Caco-2 (cell line): ENCODE measurements at regions of chr7 and their contacts with region 1.

Region 1: GRCh38 chr7:22356701-22357353 is at the start of gene RAPGEF5:
- DNase-seq: peak in 1 of 2 experiments; percentile 72
- H3K4me3 ChIP-seq: peak within 1 kb of the TSS; percentile 54
- H3K4me3 Mint-ChIP-seq: peak within 1 kb of the TSS; percentile 89
- H3K27ac Mint-ChIP-seq: peak within 1 kb of the TSS; percentile 92
- H3K4me1 ChIP-seq: peaks cover 40% of the 10 kb centered on the region
- H3K4me1 Mint-ChIP-seq: peaks cover 38% of the 10 kb centered on the region
- H3K27me3 ChIP-seq: no peaks in the 10 kb centered on the region
- H3K27me3 Mint-ChIP-seq: no peaks in the 10 kb centered on the region
- CTCF ChIP-seq: no peak
- total RNA-seq, gene RAPGEF5: 16.9 and 20.7 TPM in 2 replicates

Region 2: DNA sequence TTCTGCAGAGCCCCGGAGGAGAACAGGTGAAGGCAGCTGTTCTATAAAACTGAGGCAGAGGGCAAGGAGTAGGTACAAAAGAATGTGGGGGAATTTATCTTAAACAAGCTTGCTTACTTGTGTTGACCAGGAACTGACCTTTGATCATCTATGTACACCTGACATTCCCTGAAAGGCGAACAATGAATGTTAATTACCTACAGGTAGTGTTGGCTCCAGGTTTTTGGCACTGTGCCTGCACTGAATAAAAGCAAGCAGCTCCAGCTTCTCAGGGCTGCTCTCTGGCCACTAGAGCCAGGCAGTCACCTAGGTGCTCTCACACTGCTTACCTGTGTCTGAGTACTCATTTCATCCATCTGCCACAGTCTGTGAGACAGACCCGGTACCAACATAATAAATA is 86.9 kb before region 1 on chr7:
- CTCF ChIA-PET with region 1: no interaction called
- POLR2A ChIA-PET with region 1: no interaction called
- intact Hi-C with region 1: loop called (anchors 2 kb)
- DNase-seq: peak; percentile 66 to 86
- H3K4me3 ChIP-seq: no peak overlapping the region
- H3K4me3 Mint-ChIP-seq: no peak overlapping the region
- H3K27ac Mint-ChIP-seq: peak overlapping the region; percentile 76
- H3K4me1 ChIP-seq: peaks cover 38% of the 10 kb centered on the region
- H3K4me1 Mint-ChIP-seq: peaks cover 17% of the 10 kb centered on the region
- H3K27me3 ChIP-seq: no peaks in the 10 kb centered on the region
- H3K27me3 Mint-ChIP-seq: no peaks in the 10 kb centered on the region
- CTCF ChIP-seq: no peak

Region 3: GRCh38 chr7:22346383-22347107 is 10.3 kb before region 1 on chr7:
- CTCF ChIA-PET with region 1: no interaction called
- POLR2A ChIA-PET with region 1: no interaction called
- intact Hi-C with region 1: loop called (anchors 1 kb)
- DNase-seq: peak in 1 of 2 experiments; percentile 42
- H3K4me3 ChIP-seq: no peak overlapping the region
- H3K4me3 Mint-ChIP-seq: peak overlapping the region; percentile 30
- H3K27ac Mint-ChIP-seq: peak overlapping the region; percentile 40
- H3K4me1 ChIP-seq: peaks cover 49% of the 10 kb centered on the region
- H3K4me1 Mint-ChIP-seq: peaks cover 31% of the 10 kb centered on the region
- H3K27me3 ChIP-seq: no peaks in the 10 kb centered on the region
- H3K27me3 Mint-ChIP-seq: no peaks in the 10 kb centered on the region
- CTCF ChIP-seq: no peak

Region 4: GRCh38 chr7:22393913-22394729 is 37.3 kb after region 1 on chr7:
- CTCF ChIA-PET with region 1: no interaction called
- POLR2A ChIA-PET with region 1: no interaction called
- intact Hi-C with region 1: loop called (anchors 2 kb)
- DNase-seq: peak in 1 of 2 experiments; percentile 9
- H3K4me3 ChIP-seq: no peak overlapping the region
- H3K4me3 Mint-ChIP-seq: peak overlapping the region; percentile 13
- H3K27ac Mint-ChIP-seq: no peak overlapping the region
- H3K4me1 ChIP-seq: peaks cover 16% of the 10 kb centered on the region
- H3K4me1 Mint-ChIP-seq: peaks cover 23% of the 10 kb centered on the region
- H3K27me3 ChIP-seq: no peaks in the 10 kb centered on the region
- H3K27me3 Mint-ChIP-seq: no peaks in the 10 kb centered on the region
- CTCF ChIP-seq: no peak

Region 5: GRCh38 chr7:22411977-22412693 is 55.3 kb after region 1 on chr7:
- CTCF ChIA-PET with region 1: no interaction called
- POLR2A ChIA-PET with region 1: no interaction called
- intact Hi-C with region 1: no loop called
- DNase-seq: no peak
- H3K4me3 ChIP-seq: no peak overlapping the region
- H3K4me3 Mint-ChIP-seq: no peak overlapping the region
- H3K27ac Mint-ChIP-seq: no peak overlapping the region
- H3K4me1 ChIP-seq: no peaks in the 10 kb centered on the region
- H3K4me1 Mint-ChIP-seq: no peaks in the 10 kb centered on the region
- H3K27me3 ChIP-seq: no peaks in the 10 kb centered on the region
- H3K27me3 Mint-ChIP-seq: no peaks in the 10 kb centered on the region
- CTCF ChIP-seq: no peak

Region 6: GRCh38 chr7:22433710-22434460 is 77.1 kb after region 1 on chr7:
- CTCF ChIA-PET with region 1: no interaction called
- POLR2A ChIA-PET with region 1: no interaction called
- intact Hi-C with region 1: loop called (anchors 5 kb)
- DNase-seq: peak; percentile 19 to 48
- H3K4me3 ChIP-seq: no peak overlapping the region
- H3K4me3 Mint-ChIP-seq: no peak overlapping the region
- H3K27ac Mint-ChIP-seq: no peak overlapping the region
- H3K4me1 ChIP-seq: peaks cover 18% of the 10 kb centered on the region
- H3K4me1 Mint-ChIP-seq: peaks cover 20% of the 10 kb centered on the region
- H3K27me3 ChIP-seq: no peaks in the 10 kb centered on the region
- H3K27me3 Mint-ChIP-seq: peaks cover 5% of the 10 kb centered on the region
- CTCF ChIP-seq: no peak

Region 7: GRCh38 chr7:22452142-22452959 is 95.5 kb after region 1 on chr7:
- CTCF ChIA-PET with region 1: no interaction called
- POLR2A ChIA-PET with region 1: no interaction called
- intact Hi-C with region 1: loop called (anchors 10 kb)
- DNase-seq: peak; percentile 46 to 60
- H3K4me3 ChIP-seq: no peak overlapping the region
- H3K4me3 Mint-ChIP-seq: peak overlapping the region; percentile 32
- H3K27ac Mint-ChIP-seq: no peak overlapping the region
- H3K4me1 ChIP-seq: no peaks in the 10 kb centered on the region
- H3K4me1 Mint-ChIP-seq: peaks cover 7% of the 10 kb centered on the region
- H3K27me3 ChIP-seq: no peaks in the 10 kb centered on the region; the same call in 1 of the 2 replicates
- H3K27me3 Mint-ChIP-seq: no peaks in the 10 kb centered on the region
- CTCF ChIP-seq: peak; percentile 67 to 76

Region 8: DNA sequence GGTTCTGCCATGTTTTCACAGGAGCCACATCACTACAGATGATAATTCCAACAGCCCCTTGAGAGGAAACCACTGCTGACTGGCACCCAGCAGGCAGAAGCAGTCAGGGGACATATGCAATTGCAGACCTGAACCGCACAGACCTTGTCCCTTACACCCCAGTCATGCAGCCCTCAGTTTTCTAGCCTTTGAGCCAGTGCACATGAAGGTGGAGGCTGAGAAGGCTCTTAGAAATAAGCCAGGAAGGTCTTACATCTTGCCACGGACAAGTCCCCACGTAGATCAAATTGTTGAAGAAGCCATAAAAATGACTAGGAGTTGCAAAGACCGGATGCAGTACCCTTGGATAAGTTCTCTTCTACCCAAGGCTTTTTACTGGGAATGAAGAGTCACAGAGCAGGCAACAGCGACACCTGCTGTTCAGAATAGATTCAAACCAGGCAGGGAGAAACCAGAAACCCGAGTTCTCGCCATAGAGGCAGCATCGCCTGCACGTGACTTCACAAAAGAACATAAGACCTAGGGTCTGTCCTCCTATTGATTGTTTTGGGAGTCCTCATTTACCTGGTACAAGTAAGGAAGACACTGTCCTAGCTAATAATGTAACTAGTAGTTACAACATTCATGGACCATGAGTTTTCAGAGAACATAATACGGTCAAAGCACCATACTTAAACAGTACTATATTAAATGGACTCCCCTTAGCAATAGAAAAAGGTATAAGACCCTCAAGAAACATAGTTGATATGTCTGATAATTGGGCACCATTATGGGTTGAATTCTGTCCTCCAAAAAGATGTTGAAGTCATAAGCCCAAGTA is 132.0 kb after region 1 on chr7:
- CTCF ChIA-PET with region 1: no interaction called
- POLR2A ChIA-PET with region 1: no interaction called
- intact Hi-C with region 1: loop called (anchors 5 kb)
- DNase-seq: peak; percentile 67 to 80
- H3K4me3 ChIP-seq: no peak overlapping the region
- H3K4me3 Mint-ChIP-seq: no peak overlapping the region
- H3K27ac Mint-ChIP-seq: no peak overlapping the region
- H3K4me1 ChIP-seq: no peaks in the 10 kb centered on the region
- H3K4me1 Mint-ChIP-seq: no peaks in the 10 kb centered on the region
- H3K27me3 ChIP-seq: no peaks in the 10 kb centered on the region
- H3K27me3 Mint-ChIP-seq: no peaks in the 10 kb centered on the region
- CTCF ChIP-seq: peak; percentile 81 to 88